Activated CD4-positive, alpha-beta T cell treated with anti-CD3 and anti-CD28 coated beads, Interleukin-2, amount 10 ng/mL, durations not matched to agents 24 days and 14 days (primary cell): ENCODE measurements at regions of chr12 and their contacts with region 1.

Region 1: DNA sequence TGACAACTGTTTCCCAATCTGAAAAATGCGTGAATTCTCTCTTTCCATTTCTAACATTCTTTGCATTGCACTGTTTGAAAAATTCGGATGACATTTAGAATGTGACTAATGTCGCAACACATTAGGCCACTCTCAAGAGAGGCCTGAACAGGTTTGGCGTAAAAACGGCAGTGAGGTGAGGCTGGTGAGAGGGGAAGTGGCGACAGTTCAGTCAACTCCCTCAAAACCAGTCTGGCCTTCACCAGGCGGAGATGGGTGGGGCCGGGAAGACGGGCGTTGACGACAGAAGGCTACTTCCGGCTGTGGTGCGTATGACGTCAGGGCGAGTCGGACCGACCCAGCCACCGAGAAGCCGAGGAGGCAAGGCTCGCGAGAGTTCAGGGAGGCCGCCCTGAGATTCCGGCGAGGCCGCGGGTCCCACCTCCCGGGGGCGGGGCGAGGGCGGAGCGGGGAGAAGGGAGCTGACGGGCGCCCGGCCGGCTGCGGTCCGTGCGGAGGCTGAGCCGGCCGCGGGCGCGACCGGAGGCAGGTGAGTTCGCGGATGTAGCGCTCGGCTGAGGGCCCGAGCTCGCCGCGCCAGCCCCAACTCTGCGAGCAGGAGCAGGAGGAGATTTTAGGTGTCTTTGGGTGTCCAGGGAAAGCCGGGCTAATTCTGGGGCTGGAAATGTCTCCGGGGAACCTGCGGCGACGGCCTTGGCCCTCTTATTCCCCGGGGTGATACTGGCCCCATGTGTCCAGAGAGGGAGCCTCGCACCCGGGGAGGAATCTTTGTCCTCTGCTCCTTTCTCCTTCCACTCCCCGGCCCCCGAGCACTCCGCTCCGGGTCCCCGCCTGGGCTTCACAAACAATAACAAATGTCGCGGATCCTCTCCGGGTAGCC is at the start of gene STK38L:
- DNase-seq: peak; percentile 99
- H3K4me3 Mint-ChIP-seq: peak within 1 kb of the TSS; percentile 96
- H3K27ac Mint-ChIP-seq: peak within 1 kb of the TSS; percentile 98
- H3K4me1 Mint-ChIP-seq: peaks cover 31% of the 10 kb centered on the region
- H3K27me3 Mint-ChIP-seq: no peaks in the 10 kb centered on the region
- total RNA-seq, gene STK38L: 22.8 and 23.0 TPM in 2 replicates

Region 2: GRCh38 chr12:26937875-26938700 is 306.0 kb before region 1 on chr12 and contains the starts of genes FGFR1OP2 and INTS13:
- intact Hi-C with region 1: loop called (anchors 1 kb)
- DNase-seq: peak; percentile 99
- H3K4me3 Mint-ChIP-seq: peak within 1 kb of the TSS; percentile 94
- H3K27ac Mint-ChIP-seq: peak within 1 kb of the TSS; percentile 97
- H3K4me1 Mint-ChIP-seq: peaks cover 55% of the 10 kb centered on the region
- H3K27me3 Mint-ChIP-seq: no peaks in the 10 kb centered on the region
- total RNA-seq, gene FGFR1OP2: 45.7 and 46.7 TPM in 2 replicates
- total RNA-seq, gene INTS13: 49.7 and 51.3 TPM in 2 replicates

Region 3: GRCh38 chr12:27207615-27208413 is 36.2 kb before region 1 on chr12:
- intact Hi-C with region 1: loop called (anchors 1 kb)
- DNase-seq: peak; percentile 76
- H3K4me3 Mint-ChIP-seq: no peak overlapping the region
- H3K27ac Mint-ChIP-seq: peak overlapping the region; percentile 47
- H3K4me1 Mint-ChIP-seq: peaks cover 21% of the 10 kb centered on the region
- H3K27me3 Mint-ChIP-seq: no peaks in the 10 kb centered on the region

Region 4: GRCh38 chr12:27277846-27278260 is 33.8 kb after region 1 on chr12:
- intact Hi-C with region 1: loop called (anchors 2 kb)
- DNase-seq: peak; percentile 72
- H3K4me3 Mint-ChIP-seq: no peak overlapping the region
- H3K27ac Mint-ChIP-seq: no peak overlapping the region
- H3K4me1 Mint-ChIP-seq: peaks cover 14% of the 10 kb centered on the region
- H3K27me3 Mint-ChIP-seq: no peaks in the 10 kb centered on the region